Activated T-helper 2 cell treated with anti-CD3 and anti-CD28 coated beads, Interferon-gamma antibody, Interleukin-2, Interleukin-4, amounts not matched to agents 10 μg/mL and 5 μg/mL and 100 μg/mL, durations not matched to agents 14 hours and 24 hours and 36 hours (primary cell): ENCODE measurements at regions of chr5 and their contacts with region 1.

Region 1: DNA sequence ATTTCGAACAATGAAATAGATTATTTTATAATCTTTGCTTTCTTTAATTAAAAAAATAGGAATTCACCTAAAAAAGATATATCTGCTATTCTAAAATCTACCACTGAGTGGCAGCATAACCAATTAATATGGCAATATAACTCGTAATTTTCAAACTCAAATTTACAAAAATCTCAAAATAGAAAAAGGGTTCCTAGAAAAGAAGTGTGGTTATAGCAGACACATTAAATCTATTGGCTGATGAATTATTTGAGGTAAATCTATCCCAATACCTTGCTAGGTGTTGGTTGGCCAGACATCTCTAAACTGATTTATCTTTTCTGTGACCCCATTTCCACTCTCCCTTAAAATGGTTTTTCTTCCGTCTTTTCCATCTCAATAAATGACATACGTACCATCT is 30.2 kb upstream of the NRG2 start:
- DNase-seq: no peak
- H3K4me3 Mint-ChIP-seq: no peak overlapping the region
- H3K27ac Mint-ChIP-seq: no peak overlapping the region
- H3K4me1 Mint-ChIP-seq: no peaks in the 10 kb centered on the region
- H3K27me3 Mint-ChIP-seq: peaks cover 37% of the 10 kb centered on the region

Region 2: DNA sequence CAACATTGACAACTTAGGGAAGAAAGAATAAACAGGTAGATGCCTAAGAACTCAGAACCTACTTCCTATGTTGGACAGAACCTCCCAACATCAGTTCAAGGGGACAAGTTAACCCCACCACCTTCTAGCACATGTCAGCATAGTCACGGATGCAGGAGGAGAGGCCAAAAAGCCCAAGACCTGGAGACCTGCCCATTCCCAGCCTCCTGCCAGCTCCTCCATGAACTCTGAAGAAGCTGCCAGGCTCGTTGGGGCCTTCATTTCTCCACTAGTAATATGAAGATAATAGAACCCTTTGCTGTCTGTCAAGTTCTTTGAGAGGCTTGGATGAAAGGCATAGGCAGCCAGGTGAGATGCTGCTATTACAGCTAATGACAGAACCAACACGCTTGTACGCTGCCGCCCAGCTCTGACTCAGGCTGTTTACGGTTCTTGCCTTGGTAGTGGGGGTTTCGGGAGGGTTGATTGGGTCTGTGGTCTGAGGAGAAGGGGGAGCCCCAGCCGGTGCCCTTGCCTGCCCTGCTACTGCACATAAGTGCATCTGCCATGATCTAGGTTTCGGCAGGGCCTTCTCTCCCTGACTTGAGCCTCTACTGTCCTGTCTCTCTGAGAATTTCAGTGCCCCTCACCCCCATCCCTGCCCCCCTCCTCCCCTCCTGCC is 112.4 kb before region 1 on chr5:
- intact Hi-C with region 1: no loop called
- DNase-seq: no peak
- H3K4me3 Mint-ChIP-seq: no peak overlapping the region
- H3K27ac Mint-ChIP-seq: no peak overlapping the region
- H3K4me1 Mint-ChIP-seq: no peaks in the 10 kb centered on the region
- H3K27me3 Mint-ChIP-seq: peaks cover 5% of the 10 kb centered on the region

Region 3: GRCh38 chr5:139982157-139982974 is 90.9 kb before region 1 on chr5:
- intact Hi-C with region 1: no loop called
- DNase-seq: no peak
- H3K4me3 Mint-ChIP-seq: no peak overlapping the region
- H3K27ac Mint-ChIP-seq: no peak overlapping the region
- H3K4me1 Mint-ChIP-seq: no peaks in the 10 kb centered on the region
- H3K27me3 Mint-ChIP-seq: peaks cover 4% of the 10 kb centered on the region

Region 4: GRCh38 chr5:140107312-140108083 is 34.2 kb after region 1 on chr5:
- intact Hi-C with region 1: loop called (anchors 2 kb)
- DNase-seq: peak; percentile 90
- H3K4me3 Mint-ChIP-seq: peak overlapping the region; percentile 93
- H3K27ac Mint-ChIP-seq: peak overlapping the region; percentile 86
- H3K4me1 Mint-ChIP-seq: peaks cover 33% of the 10 kb centered on the region
- H3K27me3 Mint-ChIP-seq: peaks cover 59% of the 10 kb centered on the region

Region 5: GRCh38 chr5:140157032-140157803 is 83.9 kb after region 1 on chr5:
- intact Hi-C with region 1: loop called (anchors 1 kb)
- DNase-seq: peak; percentile 77
- H3K4me3 Mint-ChIP-seq: peak overlapping the region; percentile 33
- H3K27ac Mint-ChIP-seq: no peak overlapping the region
- H3K4me1 Mint-ChIP-seq: no peaks in the 10 kb centered on the region
- H3K27me3 Mint-ChIP-seq: peaks cover 4% of the 10 kb centered on the region

Region 6: GRCh38 chr5:140509898-140510297 is 436.6 kb after region 1 on chr5:
- intact Hi-C with region 1: no loop called
- DNase-seq: no peak
- H3K4me3 Mint-ChIP-seq: no peak overlapping the region
- H3K27ac Mint-ChIP-seq: no peak overlapping the region
- H3K4me1 Mint-ChIP-seq: no peaks in the 10 kb centered on the region
- H3K27me3 Mint-ChIP-seq: no peaks in the 10 kb centered on the region